Ovary (tissue), 10 donors: ENCODE measurements at regions of chr1 and their contacts with region 1.

Region 1: GRCh38 chr1:217311766-217312165 is 319.1 kb downstream of the GPATCH2 start:
- DNase-seq: no peak
- H3K4me3 ChIP-seq: no peak overlapping the region
- H3K27ac ChIP-seq: no peak overlapping the region
- H3K4me1 ChIP-seq: no peaks in the 10 kb centered on the region
- H3K27me3 ChIP-seq: no peaks in the 10 kb centered on the region
- CTCF ChIP-seq: no peak
- EP300 ChIP-seq: no peak
- POLR2A ChIP-seq: no peak

Region 2: GRCh38 chr1:217647791-217648190 is 336.0 kb after region 1 on chr1:
- intact Hi-C with region 1: loop called in 1 of 4 experiments (anchors 10 kb)
- DNase-seq: no peak
- H3K4me3 ChIP-seq: no peak overlapping the region
- H3K27ac ChIP-seq: no peak overlapping the region
- H3K4me1 ChIP-seq: no peaks in the 10 kb centered on the region
- H3K27me3 ChIP-seq: no peaks in the 10 kb centered on the region
- CTCF ChIP-seq: no peak
- EP300 ChIP-seq: no peak
- POLR2A ChIP-seq: no peak